ENCODE measurements at regions of chr15 and their contacts with region 1.

Region 1: GRCh38 chr15:74382004-74382816 is 14.8 kb upstream of the CYP11A1 start:
- DNase-seq: peak; percentile 70
- H3K4me3 Mint-ChIP-seq: no peak overlapping the region
- H3K27ac Mint-ChIP-seq: peak overlapping the region; percentile 76
- H3K4me1 Mint-ChIP-seq: peaks cover 77% of the 10 kb centered on the region
- H3K27me3 Mint-ChIP-seq: no peaks in the 10 kb centered on the region

Region 2: DNA sequence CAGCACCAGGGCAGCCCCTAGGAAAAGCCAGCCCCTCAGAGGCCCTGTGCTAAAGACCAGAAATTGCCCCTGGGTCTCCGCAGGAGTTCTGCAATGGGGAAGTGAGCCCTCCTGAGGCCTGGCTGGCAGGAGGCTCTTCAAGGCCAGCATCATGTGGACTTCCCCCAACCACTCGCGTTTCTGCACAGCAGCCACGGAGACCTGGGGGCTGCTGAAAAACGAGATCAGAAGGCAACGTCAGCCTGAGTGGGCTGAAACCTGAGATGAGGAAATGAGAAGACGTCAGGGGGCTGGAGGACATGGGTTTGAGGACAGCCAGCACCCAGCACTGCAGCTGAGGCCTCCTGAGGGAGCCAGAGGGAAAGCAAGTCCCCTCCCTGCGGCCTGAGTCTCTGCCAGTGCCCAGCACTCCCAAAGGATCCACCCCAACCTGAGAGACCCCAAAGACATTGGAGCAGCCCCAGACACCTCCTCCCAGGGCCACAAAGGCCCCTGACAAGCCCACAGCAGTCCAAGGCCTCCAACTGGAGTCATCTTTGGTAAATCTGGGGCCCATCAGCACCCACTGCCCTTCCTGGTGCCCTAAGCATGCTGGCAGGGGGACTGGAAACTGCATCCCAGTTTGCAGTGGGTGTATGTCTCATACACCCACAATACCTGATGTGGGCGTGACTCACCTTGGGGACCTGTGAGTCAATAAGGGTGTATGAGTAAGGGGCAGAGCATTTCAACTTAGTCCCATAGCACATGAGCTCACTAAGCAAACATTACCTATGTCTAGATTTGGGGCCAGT is 14.4 kb after region 1 on chr15:
- intact Hi-C with region 1: loop called (anchors 1 kb)
- DNase-seq: no peak
- H3K4me3 Mint-ChIP-seq: peak overlapping the region; percentile 71
- H3K27ac Mint-ChIP-seq: peak overlapping the region; percentile 99
- H3K4me1 Mint-ChIP-seq: peaks cover 98% of the 10 kb centered on the region
- H3K27me3 Mint-ChIP-seq: no peaks in the 10 kb centered on the region

Region 3: DNA sequence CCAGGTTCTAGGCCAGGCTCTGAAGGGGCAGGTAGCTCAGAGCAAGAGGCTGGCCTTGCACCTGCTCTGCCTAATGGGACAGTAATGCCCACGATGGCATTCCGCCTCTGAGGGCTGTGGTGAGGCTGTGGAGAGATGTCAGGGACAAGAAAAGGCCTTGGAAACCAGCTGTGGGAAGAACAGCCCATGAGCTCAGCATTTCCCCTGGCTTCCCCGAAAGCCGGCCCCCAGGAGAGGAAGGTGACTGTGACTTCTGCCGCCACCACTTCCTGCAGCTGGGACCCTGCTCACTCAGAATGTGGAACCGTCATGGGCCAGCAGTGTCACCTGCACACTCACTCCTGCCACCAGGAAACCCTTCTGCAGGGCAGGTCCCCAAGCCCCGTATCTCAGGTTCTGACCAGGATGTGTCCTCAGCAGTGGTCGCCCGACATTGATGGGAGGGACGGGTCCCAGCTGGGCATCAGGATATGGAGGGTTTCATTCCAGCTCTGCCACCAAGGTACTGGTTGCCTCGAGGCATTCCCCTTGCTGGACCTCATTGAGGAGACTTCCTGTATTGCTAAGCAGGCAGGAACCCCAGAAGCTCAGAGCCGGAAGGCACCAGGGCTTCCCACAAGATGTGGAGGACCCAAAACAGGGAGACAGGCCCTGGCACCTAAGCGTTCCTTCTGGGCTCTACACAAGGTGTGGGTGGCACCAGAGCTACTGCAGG is 20.8 kb after region 1 on chr15:
- intact Hi-C with region 1: loop called (anchors 1 kb)
- DNase-seq: peak; percentile 70
- H3K4me3 Mint-ChIP-seq: peak overlapping the region; percentile 75
- H3K27ac Mint-ChIP-seq: peak overlapping the region; percentile 85
- H3K4me1 Mint-ChIP-seq: peaks cover 89% of the 10 kb centered on the region
- H3K27me3 Mint-ChIP-seq: no peaks in the 10 kb centered on the region

Region 4: DNA sequence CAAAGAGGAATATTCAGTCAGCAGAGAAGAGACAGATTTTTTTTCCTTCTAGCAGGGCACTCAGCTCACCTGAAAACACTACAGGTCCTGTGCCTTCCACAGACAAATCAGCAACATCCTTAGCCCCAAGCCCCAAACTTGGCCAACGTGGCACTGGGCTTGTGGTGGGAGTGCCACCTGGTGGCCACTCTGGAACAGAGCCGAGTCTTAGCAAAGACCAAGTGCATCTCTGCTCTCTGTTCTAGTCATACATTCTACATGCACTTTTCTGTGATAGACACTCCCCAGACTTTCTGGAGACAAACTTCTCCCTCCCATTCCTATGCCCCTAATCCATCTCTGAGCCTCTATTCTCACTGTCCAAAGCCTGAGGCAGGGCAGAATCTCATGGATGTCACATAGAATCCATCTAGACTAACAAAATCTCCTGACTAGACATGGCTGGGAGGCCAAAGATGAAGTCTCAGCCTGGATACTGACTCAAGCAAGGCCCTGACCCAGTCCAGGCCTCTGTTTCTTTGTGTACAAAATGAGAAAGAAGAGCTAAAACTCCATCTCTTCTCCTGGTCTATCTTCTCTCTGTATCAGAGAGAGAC is 56.6 kb after region 1 on chr15:
- intact Hi-C with region 1: loop called (anchors 1 kb)
- DNase-seq: peak; percentile 73
- H3K4me3 Mint-ChIP-seq: no peak overlapping the region
- H3K27ac Mint-ChIP-seq: peak overlapping the region; percentile 1
- H3K4me1 Mint-ChIP-seq: peaks cover 58% of the 10 kb centered on the region
- H3K27me3 Mint-ChIP-seq: no peaks in the 10 kb centered on the region

Region 5: GRCh38 chr15:74489518-74490338 is 107.5 kb after region 1 on chr15:
- intact Hi-C with region 1: loop called (anchors 2 kb)
- DNase-seq: peak; percentile 63
- H3K4me3 Mint-ChIP-seq: no peak overlapping the region
- H3K27ac Mint-ChIP-seq: peak overlapping the region; percentile 64
- H3K4me1 Mint-ChIP-seq: peaks cover 13% of the 10 kb centered on the region
- H3K27me3 Mint-ChIP-seq: no peaks in the 10 kb centered on the region

Measured in activated T-helper 1 cell treated with anti-CD3 and anti-CD28 coated beads, Interleukin-12 subunit alpha, Interleukin-12 subunit beta, Interleukin-2, Interleukin-4 antibody, amounts not matched to agents 30 ng/mL and 10 ng/mL and 1 ng/mL, durations not matched to agents 14 hours and 24 hours and 36 hours (primary cell).